ENCODE measurements at regions of chr19 and their contacts with region 1.

Region 1: DNA sequence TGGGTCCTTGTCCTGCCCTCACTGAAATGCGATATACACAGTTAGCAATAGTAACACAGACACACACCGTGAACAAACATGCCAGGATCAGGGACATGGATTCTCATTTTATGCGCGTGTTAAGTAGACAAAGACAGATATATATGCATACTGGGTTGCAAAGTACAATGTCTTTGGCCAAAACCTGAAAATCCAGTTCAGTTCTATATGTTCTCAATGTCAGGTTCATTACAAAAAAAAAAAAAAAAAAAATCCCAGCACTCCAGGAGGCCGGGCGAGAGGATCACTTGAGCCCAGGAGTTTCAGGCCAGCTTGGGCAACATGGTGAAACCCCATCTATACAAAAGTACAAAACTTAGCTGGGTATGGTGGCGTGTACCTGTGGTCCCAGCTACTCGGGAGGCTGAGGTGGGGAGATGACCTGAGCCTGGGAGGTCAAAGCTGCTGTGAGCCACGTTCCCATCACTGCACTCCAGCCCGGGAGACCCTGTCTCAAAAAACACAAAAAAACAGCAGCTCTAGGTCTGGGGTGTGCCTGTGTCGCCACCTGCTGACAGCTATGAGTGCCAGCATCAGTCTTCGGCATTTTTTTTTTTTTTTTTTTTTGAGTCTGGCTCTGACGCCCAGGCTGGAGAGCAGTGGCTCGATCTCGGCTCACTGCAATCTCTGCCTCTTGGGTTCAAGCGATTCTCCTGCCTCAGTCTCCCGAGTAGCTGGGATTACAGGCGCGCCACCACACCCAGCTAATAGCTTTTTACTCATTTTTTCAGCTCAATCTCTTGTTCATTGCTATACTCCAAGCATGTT is 10.3 kb downstream of the AP2S1 start:
- DNase-seq: peak; percentile 68
- ATAC-seq: peak; percentile 93
- H3K4me3 Mint-ChIP-seq: no peak overlapping the region
- H3K27ac Mint-ChIP-seq: peak overlapping the region; percentile 38
- H3K4me1 Mint-ChIP-seq: no peaks in the 10 kb centered on the region
- H3K27me3 Mint-ChIP-seq: no peaks in the 10 kb centered on the region
- CTCF ChIP-seq: peak; percentile 89

Region 2: DNA sequence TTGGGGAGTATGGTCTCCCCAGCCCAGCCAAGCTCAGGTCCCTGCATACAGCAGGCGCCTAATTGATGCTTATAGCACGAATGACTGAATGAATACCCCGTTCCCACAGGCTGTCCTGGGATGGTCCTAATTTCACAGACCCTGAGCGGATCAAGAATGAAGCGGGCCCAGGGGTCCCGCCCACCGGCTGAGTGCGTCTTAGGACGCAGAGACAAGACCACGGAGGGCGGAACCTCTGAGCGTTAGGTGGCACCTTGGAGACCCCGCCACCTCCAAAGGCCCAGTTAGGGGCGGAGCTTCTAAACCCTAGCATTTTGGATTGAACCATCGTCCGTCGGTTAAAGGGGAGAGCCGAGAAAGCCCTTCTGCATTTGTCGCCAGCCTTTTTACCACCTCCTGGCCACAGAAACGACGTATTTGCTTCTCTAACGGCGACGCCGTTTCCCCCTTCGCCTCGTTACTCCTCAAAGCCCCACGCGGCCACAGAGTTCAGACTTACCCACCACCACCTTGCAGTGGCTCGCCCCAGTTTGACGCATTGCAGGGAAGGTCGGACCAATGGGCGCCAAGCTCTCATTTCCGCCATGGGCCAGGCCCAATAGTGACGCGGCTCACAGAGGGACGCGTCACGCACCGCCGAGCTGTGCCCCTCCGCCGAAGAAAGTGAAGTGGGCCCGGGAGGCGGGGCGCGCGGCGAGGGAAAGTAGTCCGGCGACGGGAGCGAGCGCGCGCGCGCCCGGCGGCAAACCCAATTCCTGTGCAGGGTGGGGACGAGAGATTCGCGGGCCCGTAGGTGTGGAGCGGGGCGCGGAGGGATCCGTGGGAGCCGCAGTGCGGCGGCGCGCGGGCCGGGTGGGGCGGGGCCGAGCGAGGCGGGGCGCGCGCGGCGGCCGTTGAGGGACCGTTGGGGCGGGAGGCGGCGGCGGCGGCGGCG is 239.7 kb before region 1 on chr19:
- CTCF ChIA-PET with region 1: no interaction called
- POLR2A ChIA-PET with region 1: no interaction called
- intact Hi-C with region 1: no loop called
- DNase-seq: peak; percentile 99
- ATAC-seq: peak; percentile 90
- H3K4me3 Mint-ChIP-seq: peak overlapping the region; percentile 99
- H3K27ac Mint-ChIP-seq: peak overlapping the region; percentile 100
- H3K4me1 Mint-ChIP-seq: peaks cover 27% of the 10 kb centered on the region
- H3K27me3 Mint-ChIP-seq: no peaks in the 10 kb centered on the region
- CTCF ChIP-seq: no peak

Region 3: GRCh38 chr19:46670813-46671212 is 169.5 kb before region 1 on chr19:
- CTCF ChIA-PET with region 1: no interaction called
- POLR2A ChIA-PET with region 1: no interaction called
- intact Hi-C with region 1: no loop called
- DNase-seq: no peak
- ATAC-seq: no peak
- H3K4me3 Mint-ChIP-seq: no peak overlapping the region
- H3K27ac Mint-ChIP-seq: no peak overlapping the region
- H3K4me1 Mint-ChIP-seq: no peaks in the 10 kb centered on the region
- H3K27me3 Mint-ChIP-seq: no peaks in the 10 kb centered on the region
- CTCF ChIP-seq: no peak

Region 4: DNA sequence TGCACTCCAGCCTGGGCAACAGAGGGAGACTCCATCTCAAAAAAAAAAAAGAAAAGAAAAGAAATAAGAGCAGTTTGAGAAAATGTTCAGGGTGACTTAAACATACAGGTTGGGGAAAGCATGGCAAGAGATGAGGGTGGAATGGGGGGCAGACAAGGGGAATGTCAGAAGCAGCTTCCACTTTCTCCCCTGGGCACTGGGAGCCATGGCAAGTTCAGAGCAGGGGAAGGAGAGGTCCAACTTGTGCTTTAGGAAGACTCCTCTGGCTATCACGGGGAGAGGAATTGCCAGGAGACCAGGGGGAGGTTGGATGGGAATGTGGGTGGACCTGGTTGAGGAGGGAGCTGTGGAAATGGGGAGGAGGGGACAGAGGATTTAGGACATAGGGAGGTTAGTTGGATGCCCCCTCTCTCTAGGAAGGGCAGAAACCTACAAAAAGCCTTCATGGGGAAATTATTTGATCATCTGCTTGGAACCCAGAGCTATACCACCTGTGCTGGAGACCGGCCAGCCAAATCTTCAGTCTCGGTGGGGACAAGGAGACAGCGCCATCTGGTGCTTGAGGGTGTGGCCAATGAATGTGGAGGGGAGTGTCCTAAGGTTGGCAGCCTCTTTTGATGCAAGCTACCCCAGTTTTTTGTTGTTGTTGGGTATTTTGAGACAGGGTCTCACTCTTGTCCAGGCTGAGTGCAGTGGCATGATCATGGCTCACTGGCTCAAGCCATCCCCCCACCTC is 86.8 kb before region 1 on chr19:
- CTCF ChIA-PET with region 1: interaction called, 147 read pairs
- POLR2A ChIA-PET with region 1: interaction called, 3 read pairs
- intact Hi-C with region 1: loop called (anchors 2 kb)
- DNase-seq: peak; percentile 85
- ATAC-seq: peak; percentile 92
- H3K4me3 Mint-ChIP-seq: no peak overlapping the region
- H3K27ac Mint-ChIP-seq: no peak overlapping the region
- H3K4me1 Mint-ChIP-seq: peaks cover 8% of the 10 kb centered on the region
- H3K27me3 Mint-ChIP-seq: no peaks in the 10 kb centered on the region
- CTCF ChIP-seq: peak; percentile 13

Region 5: DNA sequence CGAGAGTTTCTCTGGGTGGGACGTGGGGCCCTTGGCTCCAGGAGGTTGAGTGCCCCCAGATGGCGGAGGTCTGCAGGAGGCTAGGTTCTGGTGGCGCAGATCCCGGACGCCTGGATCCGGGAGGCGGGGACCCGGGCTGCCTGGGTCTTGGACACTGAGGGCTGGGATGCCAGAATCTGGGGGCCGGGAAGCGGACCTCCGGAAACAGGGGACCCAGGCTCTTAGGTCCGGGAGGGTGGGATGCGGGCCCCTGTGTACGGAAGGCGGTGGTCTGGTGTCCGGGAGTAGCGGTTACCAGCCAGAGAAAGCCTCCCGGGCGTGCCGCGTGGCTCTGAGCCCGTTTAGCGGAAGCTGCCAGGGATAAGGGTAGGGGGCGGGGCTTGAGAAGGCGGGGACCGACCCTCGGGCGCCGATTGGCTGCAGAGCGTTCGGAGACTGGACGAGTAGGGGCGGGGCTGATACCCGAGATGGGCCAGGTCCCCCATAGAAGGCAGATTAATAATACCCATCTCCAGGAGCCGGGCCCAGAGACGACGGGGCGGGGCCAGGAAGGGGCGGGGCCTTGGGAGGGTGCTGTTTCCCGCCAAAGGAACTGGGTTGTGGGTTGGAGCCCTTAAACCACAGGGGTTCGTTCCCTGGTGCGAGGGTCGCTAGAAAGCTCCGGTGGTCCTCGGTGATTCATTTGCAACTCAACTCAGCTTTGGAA is 51.9 kb before region 1 on chr19 and contains the start of gene SLC1A5:
- CTCF ChIA-PET with region 1: interaction called, 23 read pairs
- POLR2A ChIA-PET with region 1: interaction called, 8 read pairs
- intact Hi-C with region 1: loop called (anchors 10 kb)
- DNase-seq: peak; percentile 99
- ATAC-seq: peak; percentile 83
- H3K4me3 Mint-ChIP-seq: peak within 1 kb of the TSS; percentile 98
- H3K27ac Mint-ChIP-seq: peak within 1 kb of the TSS; percentile 98
- H3K4me1 Mint-ChIP-seq: peaks cover 29% of the 10 kb centered on the region
- H3K27me3 Mint-ChIP-seq: no peaks in the 10 kb centered on the region
- CTCF ChIP-seq: no peak
- total RNA-seq, gene SLC1A5: 235 TPM

Region 6: GRCh38 chr19:46828484-46828883 is 11.9 kb before region 1 on chr19:
- CTCF ChIA-PET with region 1: interaction called, 29 read pairs
- POLR2A ChIA-PET with region 1: no interaction called
- intact Hi-C with region 1: no loop called
- DNase-seq: peak; percentile 91
- ATAC-seq: peak; percentile 60
- H3K4me3 Mint-ChIP-seq: no peak overlapping the region
- H3K27ac Mint-ChIP-seq: no peak overlapping the region
- H3K4me1 Mint-ChIP-seq: peaks cover 18% of the 10 kb centered on the region
- H3K27me3 Mint-ChIP-seq: no peaks in the 10 kb centered on the region
- CTCF ChIP-seq: no peak

Region 7: DNA sequence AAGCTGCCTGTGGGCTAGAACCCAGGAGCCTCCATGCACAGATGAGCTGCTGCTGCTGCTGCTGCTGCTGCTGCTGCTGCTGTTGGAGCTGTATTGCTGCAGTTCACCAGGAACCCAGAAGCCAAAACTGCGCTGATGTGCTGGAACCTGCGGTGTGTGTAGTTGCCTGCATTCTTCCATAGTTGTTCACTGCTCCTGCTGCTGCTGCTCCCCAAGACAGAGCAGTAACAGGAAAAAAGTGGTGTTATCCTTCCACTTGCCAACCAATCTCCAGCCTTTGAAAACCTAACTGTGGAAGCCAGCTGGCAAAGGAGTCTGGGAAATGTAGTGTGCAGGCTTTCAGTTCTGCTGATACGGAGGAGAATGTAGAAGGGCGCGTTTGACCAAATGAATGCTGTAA is 58.4 kb after region 1 on chr19:
- CTCF ChIA-PET with region 1: no interaction called
- POLR2A ChIA-PET with region 1: no interaction called
- intact Hi-C with region 1: no loop called
- DNase-seq: no peak
- ATAC-seq: no peak
- H3K4me3 Mint-ChIP-seq: no peak overlapping the region
- H3K27ac Mint-ChIP-seq: no peak overlapping the region
- H3K4me1 Mint-ChIP-seq: peaks cover 35% of the 10 kb centered on the region
- H3K27me3 Mint-ChIP-seq: no peaks in the 10 kb centered on the region
- CTCF ChIP-seq: no peak

Measured in activated CD8-positive, alpha-beta T cell treated with anti-CD3 and anti-CD28 coated beads for 36 hours (primary cell).